Naive thymus-derived CD8-positive, alpha-beta T cell (primary cell): ENCODE measurements at regions of chr19 and their contacts with region 1.

Region 1: GRCh38 chr19:52048555-52049501 is at the start of gene ZNF432:
- DNase-seq: peak; percentile 66 to 95 (median 80)
- ATAC-seq: peak; percentile 86 to 87
- H3K4me3 Mint-ChIP-seq: peak within 1 kb of the TSS; percentile 94 to 100 (median 99)
- H3K27ac Mint-ChIP-seq: peak within 1 kb of the TSS; percentile 97 to 100 (median 100)
- H3K4me1 Mint-ChIP-seq: peaks cover 5 to 33% (median 25%) of the 10 kb centered on the region in 4 donors
- H3K27me3 Mint-ChIP-seq: no peaks in the 10 kb centered on the region
- polyA plus RNA-seq, gene ZNF432: 2.7 to 4.2 (median 3.2) TPM

Region 2: DNA sequence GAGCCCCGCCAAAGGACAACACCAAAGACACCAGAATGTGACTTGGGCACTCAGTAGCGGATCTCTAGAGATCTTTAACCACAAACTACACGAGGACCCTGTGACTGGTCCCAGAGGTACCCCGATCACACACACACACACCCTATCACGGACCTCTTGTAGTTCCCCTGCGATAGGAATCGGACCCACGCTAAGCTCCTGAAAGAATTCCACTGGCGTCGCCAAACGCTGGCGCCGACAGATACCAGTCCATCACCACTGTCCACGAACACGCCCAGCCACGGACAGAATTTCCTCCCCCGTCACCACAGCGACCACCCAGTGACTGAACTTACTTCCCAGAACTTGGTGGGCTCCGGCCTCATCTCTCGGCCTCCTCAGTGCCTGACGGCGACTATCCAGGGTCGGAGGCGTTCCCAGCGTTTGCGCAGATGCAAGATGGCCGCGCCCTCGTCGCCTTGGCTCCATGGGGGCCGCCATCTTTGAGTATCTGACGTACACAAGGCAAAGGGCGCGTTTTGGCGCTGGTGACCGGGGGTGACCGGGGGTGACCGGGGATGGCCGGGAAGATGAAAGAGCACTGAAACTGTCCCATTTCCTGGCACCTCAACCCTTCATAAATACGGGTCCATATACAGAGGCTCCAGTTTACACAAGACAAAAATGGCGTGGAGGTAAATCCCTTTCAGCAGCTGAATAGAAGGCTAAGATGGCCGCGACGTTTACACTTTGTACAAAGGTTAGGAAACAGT is 40.8 kb before region 1 on chr19 and contains the start of gene ZNF615:
- POLR2A ChIA-PET with region 1: interaction called, 15 read pairs
- DNase-seq: peak; percentile 73 to 98 (median 83)
- ATAC-seq: peak; percentile 92
- H3K4me3 Mint-ChIP-seq: peak within 1 kb of the TSS; percentile 90 to 100 (median 98)
- H3K27ac Mint-ChIP-seq: peak within 1 kb of the TSS; percentile 95 to 99 (median 99)
- H3K4me1 Mint-ChIP-seq: peaks cover 12 to 23% (median 18%) of the 10 kb centered on the region in 4 donors
- H3K27me3 Mint-ChIP-seq: no peaks in the 10 kb centered on the region
- polyA plus RNA-seq, gene ZNF615: 4.9 to 9.2 (median 5.9) TPM

Region 3: DNA sequence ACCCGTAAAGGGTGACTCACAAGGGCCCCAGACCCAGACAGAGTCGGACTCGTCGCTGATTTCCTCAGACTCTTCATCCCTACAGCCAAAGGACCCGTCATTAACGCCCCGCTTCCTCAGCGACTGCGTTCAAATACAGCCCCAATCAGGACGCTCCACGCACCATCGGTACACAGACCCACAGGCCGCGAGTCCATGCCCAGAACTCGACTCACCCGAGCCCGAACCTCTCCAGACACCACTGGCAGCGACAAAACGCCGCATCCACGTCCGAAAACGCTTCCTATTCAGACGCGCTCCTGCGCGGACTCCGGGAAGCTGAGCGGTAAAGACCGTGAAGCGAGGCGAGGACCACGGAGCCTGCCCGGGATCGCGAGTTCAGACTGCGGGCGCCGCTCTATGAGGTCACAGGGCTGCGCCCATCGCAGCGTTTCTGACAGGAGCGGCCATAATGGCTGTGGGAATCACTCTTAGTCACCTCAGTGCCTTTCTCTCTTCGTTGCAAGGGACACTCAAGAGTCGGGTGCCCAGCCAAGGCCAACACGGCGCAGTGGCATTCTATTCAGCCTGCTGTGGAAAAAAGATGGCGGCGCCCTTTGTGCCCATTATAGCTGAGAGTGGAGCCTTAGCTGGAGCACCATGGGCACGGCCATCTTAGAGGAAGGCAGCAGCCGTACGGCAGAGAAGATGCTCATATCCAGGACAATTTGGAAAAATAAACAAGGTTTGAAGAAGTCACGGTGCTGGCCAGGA is 20.6 kb before region 1 on chr19 and contains the start of gene ZNF614:
- POLR2A ChIA-PET with region 1: interaction called, 13 read pairs
- DNase-seq: peak; percentile 66 to 96 (median 86)
- ATAC-seq: peak; percentile 89 to 91
- H3K4me3 Mint-ChIP-seq: peak within 1 kb of the TSS; percentile 86 to 97 (median 92)
- H3K27ac Mint-ChIP-seq: peak within 1 kb of the TSS; percentile 85 to 100 (median 98)
- H3K4me1 Mint-ChIP-seq: peaks cover 17 to 35% (median 27%) of the 10 kb centered on the region in 4 donors
- H3K27me3 Mint-ChIP-seq: no peaks in the 10 kb centered on the region
- polyA plus RNA-seq, gene ZNF614: 1.8 to 8.5 (median 3.1) TPM

Region 4: DNA sequence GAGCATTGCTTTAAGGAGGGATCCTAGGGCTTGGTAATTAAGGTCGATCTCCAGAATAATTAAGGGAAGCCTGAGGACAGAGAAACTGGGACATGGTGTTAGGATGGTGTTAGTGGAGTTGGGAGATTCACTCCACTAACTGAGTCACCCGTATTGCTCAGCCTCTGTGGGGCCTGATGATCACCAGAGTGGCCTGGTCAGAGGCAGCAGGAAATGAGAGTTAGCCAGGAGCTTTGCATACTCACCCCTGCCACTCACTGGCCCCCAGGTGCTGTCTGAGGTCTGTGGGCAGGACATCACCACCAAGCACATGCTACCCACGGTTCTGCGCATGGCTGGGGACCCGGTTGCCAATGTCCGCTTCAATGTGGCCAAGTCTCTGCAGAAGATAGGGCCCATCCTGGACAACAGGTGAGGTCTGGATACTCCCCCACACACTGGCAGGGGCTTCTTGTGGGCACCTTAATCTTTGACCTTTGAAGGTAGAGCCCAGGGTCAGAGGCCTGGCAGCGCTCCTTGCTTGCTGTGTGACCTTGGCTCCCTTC is 173.1 kb after region 1 on chr19:
- POLR2A ChIA-PET with region 1: no interaction called
- DNase-seq: no peak
- ATAC-seq: no peak
- H3K4me3 Mint-ChIP-seq: no peak overlapping the region
- H3K27ac Mint-ChIP-seq: peak overlapping the region in 2 of 10 donors; percentile 11 to 12
- H3K4me1 Mint-ChIP-seq: peaks cover 0 to 6% (median 1%) of the 10 kb centered on the region in 4 donors
- H3K27me3 Mint-ChIP-seq: no peaks in the 10 kb centered on the region